Thyroid gland (tissue), 4 donors: ENCODE measurements at regions of chr3 and their contacts with region 1.

Region 1: DNA sequence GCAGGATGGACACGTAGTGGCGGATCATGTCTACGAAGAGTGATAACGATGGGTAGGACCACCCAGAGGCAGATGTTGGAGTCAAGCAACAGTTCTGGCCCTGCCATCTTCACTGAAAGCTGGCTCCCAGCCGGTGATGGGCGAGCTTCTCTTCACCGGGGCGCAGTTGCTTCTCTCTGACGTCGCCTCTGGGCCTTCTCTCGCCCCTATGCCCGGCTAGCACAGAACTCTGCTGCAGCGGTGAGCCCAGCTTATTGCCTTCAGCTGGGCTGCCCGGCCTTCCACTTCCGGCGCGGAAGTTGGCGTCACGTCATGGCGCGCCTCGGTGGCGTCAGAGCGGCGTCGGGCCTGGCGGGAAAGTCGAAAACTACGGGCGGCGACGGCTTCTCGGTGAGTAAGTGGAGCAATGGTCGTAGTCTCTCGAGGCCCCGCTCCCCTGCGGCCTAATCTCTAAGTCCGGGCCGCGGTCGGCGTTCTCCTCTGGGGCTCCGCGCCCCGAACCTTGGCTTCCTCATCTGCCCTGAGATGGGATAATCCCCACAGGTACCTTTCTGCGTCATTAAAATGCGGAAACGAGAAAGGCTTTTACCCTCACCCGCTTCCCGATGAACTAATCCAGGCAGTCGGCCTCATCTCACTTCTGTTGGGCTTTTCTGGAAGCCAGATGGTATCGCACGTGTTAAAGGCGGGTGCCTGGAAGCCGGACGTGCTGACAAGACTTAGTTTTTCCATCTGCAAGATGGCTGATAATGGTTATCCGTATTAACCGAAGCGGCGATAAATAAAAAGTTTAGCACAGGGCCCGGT is at the start of gene FANCD2:
- DNase-seq: peak; percentile 83 to 86
- H3K4me3 ChIP-seq: peak within 1 kb of the TSS; percentile 38 to 82 (median 78)
- H3K27ac ChIP-seq: peak within 1 kb of the TSS; percentile 46 to 67 (median 51)
- H3K4me1 ChIP-seq: peaks cover 16% of the 10 kb centered on the region in 2 donors
- H3K27me3 ChIP-seq: no peaks in the 10 kb centered on the region
- CTCF ChIP-seq: peak in 1 of 6 experiments; percentile 10
- POLR2A ChIP-seq: peak; percentile 65 to 80
- total RNA-seq, gene FANCD2: 2.0 to 7.9 (median 4.4) TPM

Region 2: GRCh38 chr3:9946112-9947024 is 79.9 kb before region 1 on chr3:
- intact Hi-C with region 1: loop called (anchors 10 kb)
- DNase-seq: peak; percentile 91 to 92
- H3K4me3 ChIP-seq: peak overlapping the region; percentile 36 to 71 (median 68)
- H3K27ac ChIP-seq: peak overlapping the region; percentile 70 to 90 (median 77)
- H3K4me1 ChIP-seq: peaks cover 12 to 17% of the 10 kb centered on the region in 2 donors
- H3K27me3 ChIP-seq: no peaks in the 10 kb centered on the region
- CTCF ChIP-seq: peak in 5 of 6 experiments; percentile 18 to 86 (median 74)
- POLR2A ChIP-seq: peak in 1 of 2 donors; percentile 72

Region 3: DNA sequence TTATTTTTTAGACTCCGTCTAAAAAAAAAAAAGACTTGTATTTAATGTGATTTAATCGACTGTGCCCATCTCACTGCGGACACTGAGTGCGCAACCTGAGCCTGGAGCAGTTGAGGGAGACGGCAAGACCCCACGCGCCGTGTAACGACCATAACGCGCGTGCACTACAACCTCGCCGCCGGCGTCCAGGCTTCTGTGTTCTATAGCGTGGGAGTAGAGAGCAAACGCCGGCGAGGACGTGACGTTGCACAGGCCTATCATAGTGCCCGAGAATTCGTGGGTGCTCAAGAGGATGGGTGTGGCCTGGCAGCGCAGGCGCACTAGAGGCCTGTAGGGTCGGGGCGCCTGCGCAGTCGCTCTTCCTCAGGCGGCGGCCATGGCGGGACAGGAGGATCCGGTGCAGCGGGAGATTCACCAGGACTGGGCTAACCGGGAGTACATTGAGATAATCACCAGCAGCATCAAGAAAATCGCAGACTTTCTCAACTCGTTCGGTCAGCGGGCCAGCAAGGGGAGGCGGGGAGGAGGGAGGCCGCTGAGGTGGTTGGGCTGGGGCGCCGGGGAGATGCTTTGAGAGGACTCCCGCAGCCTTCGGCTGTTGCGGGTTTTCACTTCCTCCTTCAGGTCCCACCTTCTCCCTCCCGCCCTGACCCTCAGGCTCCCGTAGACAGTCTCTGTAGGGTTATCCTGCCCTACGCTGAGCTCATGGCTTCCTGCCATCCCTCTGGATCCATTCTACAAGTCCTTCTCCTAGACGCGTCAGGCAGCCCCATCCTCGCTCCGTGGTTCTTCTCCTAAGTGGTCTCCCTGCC is 89.2 kb after region 1 on chr3 and contains the start of gene BRK1:
- intact Hi-C with region 1: loop called (anchors 10 kb)
- DNase-seq: peak; percentile 96 to 97
- H3K4me3 ChIP-seq: peak within 1 kb of the TSS; percentile 12 to 90 (median 84)
- H3K27ac ChIP-seq: peak within 1 kb of the TSS; percentile 72 to 78 (median 72)
- H3K4me1 ChIP-seq: peaks cover 9 to 11% of the 10 kb centered on the region in 2 donors
- H3K27me3 ChIP-seq: no peaks in the 10 kb centered on the region
- CTCF ChIP-seq: peak in 1 of 6 experiments; percentile 11
- POLR2A ChIP-seq: peak; percentile 48 to 94
- total RNA-seq, gene BRK1: 80.6 to 158 (median 108) TPM

Region 4: DNA sequence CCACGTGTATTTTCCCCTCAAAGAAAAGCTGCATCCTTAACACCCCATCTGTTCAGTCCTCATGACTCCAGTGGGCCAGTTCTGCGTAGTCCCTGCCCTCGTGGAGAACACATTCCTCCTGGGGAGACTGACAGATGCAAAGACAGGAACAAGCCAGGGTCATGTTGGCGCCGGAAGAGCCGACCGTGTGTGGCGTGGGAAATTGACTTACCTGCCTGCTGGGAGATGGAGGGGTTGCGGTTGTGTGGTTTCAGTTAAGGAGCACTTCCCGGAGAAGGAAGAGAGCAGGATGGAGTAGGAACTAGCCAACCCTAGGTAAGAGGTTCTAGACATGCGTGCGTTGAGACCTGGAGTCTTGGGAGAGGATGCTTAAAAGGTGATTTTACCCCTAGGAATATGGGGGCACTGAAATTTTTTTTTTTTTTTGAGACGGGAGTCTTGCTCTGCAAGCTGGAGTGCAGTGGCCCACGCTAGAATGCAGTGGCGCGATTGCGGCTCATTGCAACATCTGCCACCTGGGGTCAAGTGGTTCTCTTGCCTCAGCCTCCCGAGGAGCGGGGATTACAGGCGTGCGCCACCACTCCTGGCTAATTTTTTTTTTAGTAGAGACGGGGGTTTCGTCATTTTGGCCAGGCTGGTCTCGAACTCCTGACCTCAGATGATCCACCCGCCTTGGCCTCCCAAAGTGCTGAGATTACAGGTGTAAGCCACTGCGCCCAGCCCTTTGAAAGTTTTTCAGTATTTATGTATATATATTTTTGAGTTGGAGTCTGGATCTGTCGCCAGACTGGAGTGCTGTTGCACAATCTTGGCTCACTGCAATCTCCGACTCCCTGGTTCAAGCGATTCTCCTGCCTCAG is 116.7 kb after region 1 on chr3:
- intact Hi-C with region 1: loop called (anchors 10 kb)
- DNase-seq: peak in 1 of 2 donors; percentile 15
- H3K4me3 ChIP-seq: peak overlapping the region in 1 of 3 donors; percentile 73
- H3K27ac ChIP-seq: peak overlapping the region in 1 of 3 donors; percentile 87
- H3K4me1 ChIP-seq: peaks cover 13 to 19% of the 10 kb centered on the region in 2 donors
- H3K27me3 ChIP-seq: no peaks in the 10 kb centered on the region
- CTCF ChIP-seq: no peak
- POLR2A ChIP-seq: no peak